Endothelial cell of umbilical vein (primary cell): ENCODE measurements at regions of chr16 and their contacts with region 1.

Region 1: DNA sequence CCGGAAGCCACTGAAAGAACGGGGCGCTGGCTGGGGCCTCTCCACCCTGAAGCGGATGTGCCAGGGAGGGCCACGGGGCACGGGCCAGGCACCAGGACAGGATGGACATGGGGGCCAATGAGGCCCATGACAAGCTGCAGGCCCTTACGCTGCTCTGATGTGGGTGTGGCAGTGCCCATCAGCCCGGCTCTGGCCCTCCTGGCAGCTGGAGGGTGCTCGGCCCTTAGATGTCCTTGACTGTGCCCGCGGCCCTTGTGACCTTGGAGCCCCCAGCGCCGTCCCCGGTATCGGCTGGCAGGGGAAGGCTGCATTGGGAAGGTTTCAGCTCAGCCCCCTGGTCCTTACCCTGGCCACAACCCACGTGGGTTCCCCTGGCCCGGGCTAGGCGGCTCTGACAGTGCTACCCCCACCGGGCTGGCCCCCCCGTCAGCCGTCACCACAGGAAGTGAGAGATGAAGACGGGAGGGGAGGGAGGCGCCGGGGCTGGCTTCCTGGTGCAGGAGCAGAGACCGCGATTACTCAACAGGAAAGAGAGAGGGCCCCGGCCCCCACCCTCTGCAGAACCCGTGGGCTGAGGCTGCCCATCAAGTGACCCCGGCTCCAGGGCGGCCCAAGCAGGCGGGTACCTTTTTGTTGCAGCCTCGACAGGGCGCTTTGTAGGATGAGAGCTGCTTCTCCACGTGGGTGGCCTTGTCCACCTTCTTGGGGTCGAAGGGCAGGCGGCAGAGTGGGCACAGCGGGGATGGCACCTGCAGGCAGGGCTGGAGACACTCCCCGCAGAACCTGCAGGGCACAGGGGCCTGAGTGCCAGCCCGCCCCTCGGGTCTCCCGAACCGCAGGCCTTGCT is 5.3 kb downstream of the RNF166 start:
- DNase-seq: peak; percentile 95
- H3K4me3 ChIP-seq: no peak overlapping the region
- H3K27ac ChIP-seq: peak overlapping the region; percentile 69
- H3K4me1 ChIP-seq: peaks cover 52% of the 10 kb centered on the region
- H3K27me3 ChIP-seq: no peaks in the 10 kb centered on the region
- CTCF ChIP-seq: no peak
- POLR2A ChIP-seq: no peak

Region 2: GRCh38 chr16:88686439-88687253 is 14.2 kb before region 1 on chr16 and contains the start of gene SNAI3:
- CTCF ChIA-PET with region 1: interaction called, 4 read pairs
- POLR2A ChIA-PET with region 1: no interaction called
- dilution Hi-C with region 1: no loop called
- intact Hi-C with region 1: loop called (anchors 1 kb)
- DNase-seq: peak; percentile 60
- H3K4me3 ChIP-seq: peak within 1 kb of the TSS; percentile 29 to 57 (median 40)
- H3K27ac ChIP-seq: no peak within 1 kb of the TSS
- H3K4me1 ChIP-seq: peaks cover 2% of the 10 kb centered on the region
- H3K27me3 ChIP-seq: peaks cover 0 to 2% of the 10 kb centered on the region in 2 experiments
- CTCF ChIP-seq: no peak
- POLR2A ChIP-seq: peak; percentile 57
- total RNA-seq, gene SNAI3: 0.18 and 0.31 TPM in 2 replicates

Region 3: DNA sequence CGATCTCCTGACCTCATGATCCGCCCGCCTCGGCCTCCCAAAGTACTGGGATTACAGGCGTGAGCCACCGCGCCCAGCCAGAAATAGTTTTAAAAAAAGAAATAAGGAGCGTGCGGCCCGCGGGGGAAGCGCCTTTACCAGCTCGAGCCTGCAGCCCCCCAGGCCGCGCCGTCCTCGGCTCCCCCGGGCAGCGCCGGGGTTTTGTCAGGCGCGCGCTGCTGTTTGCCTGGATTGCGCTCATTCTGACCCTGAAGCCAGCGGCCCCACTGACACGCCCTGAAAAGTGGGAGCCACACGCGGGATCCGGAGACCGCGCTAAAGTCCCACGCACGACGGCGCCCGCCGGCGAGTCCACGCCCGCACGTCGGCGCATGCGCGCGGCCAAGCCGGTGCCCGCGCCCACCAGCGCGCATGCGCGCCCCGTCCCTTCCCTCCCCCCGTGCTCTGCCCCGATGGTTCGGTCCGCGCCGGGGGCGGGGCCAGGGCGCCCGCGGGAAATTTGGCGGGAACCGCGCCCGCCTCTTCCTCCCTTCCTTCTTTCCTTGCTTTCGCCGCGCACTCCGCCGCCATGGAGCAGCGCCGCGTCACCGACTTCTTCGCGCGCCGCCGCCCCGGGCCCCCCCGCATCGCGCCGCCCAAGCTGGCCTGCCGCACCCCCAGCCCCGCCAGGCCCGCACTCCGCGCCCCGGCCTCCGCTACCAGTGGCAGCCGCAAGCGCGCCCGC is 102.6 kb after region 1 on chr16 and contains the start of gene CDT1:
- CTCF ChIA-PET with region 1: no interaction called
- POLR2A ChIA-PET with region 1: no interaction called
- dilution Hi-C with region 1: no loop called
- intact Hi-C with region 1: no loop called
- DNase-seq: peak; percentile 76
- H3K4me3 ChIP-seq: peak within 1 kb of the TSS; percentile 46 to 49 (median 47)
- H3K27ac ChIP-seq: peak within 1 kb of the TSS; percentile 58
- H3K4me1 ChIP-seq: peaks cover 10% of the 10 kb centered on the region
- H3K27me3 ChIP-seq: no peaks in the 10 kb centered on the region
- CTCF ChIP-seq: no peak
- POLR2A ChIP-seq: peak; percentile 82
- total RNA-seq, gene CDT1: 26.5 and 30.6 TPM in 2 replicates